A673 (cell line): ENCODE measurements at regions of chr19 and their contacts with region 1.

Region 1: DNA sequence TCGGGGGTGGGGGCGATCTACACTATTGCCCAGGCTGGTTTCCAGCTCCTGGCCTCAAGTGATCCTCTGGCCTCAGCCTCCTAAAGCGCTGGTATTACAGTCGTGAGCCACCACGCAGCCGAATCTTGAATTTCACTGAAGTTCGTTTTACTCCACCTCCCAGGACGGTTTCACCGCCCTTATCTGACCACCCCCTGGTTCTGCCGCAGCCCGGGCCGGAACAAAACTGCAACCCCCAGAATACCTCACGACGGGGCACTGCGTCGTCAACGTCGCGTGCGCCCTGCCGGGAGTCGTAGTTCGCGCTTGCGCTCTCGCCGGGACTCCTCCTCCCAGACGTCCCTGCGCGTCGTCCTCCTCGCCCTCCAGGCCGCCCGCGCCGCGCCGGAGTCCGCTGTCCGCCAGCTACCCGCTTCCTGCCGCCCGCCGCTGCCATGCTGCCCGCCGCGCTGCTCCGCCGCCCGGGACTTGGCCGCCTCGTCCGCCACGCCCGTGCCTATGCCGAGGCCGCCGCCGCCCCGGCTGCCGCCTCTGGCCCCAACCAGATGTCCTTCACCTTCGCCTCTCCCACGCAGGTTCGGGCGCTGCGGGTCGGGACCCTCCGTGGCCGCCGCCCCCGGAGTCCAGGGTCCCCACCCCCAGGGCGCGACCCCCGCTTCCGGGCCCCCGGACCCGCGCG is at the start of gene ATP5F1D:
- DNase-seq: peak; percentile 97
- H3K4me3 ChIP-seq: peak within 1 kb of the TSS; percentile 98
- H3K27ac ChIP-seq: peak within 1 kb of the TSS; percentile 95
- H3K4me1 ChIP-seq: peaks cover 49% of the 10 kb centered on the region
- H3K27me3 ChIP-seq: no peaks in the 10 kb centered on the region
- CTCF ChIP-seq: no peak
- total RNA-seq, gene ATP5F1D: 237 and 250 TPM in 2 replicates

Region 2: GRCh38 chr19:984165-984967 is 257.2 kb before region 1 on chr19 and contains the start of gene WDR18:
- CTCF ChIA-PET with region 1: interaction called, 3 read pairs
- POLR2A ChIA-PET with region 1: no interaction called
- intact Hi-C with region 1: loop called (anchors 2 kb)
- DNase-seq: peak; percentile 96
- H3K4me3 ChIP-seq: peak within 1 kb of the TSS; percentile 80
- H3K27ac ChIP-seq: peak within 1 kb of the TSS; percentile 98
- H3K4me1 ChIP-seq: peaks cover 13% of the 10 kb centered on the region
- H3K27me3 ChIP-seq: no peaks in the 10 kb centered on the region
- CTCF ChIP-seq: no peak
- total RNA-seq, gene WDR18: 109 and 116 TPM in 2 replicates

Region 3: GRCh38 chr19:1533510-1534150 is 292.1 kb after region 1 on chr19:
- CTCF ChIA-PET with region 1: no interaction called
- POLR2A ChIA-PET with region 1: interaction called, 13 read pairs
- intact Hi-C with region 1: no loop called
- DNase-seq: no peak
- H3K4me3 ChIP-seq: no peak overlapping the region
- H3K27ac ChIP-seq: no peak overlapping the region
- H3K4me1 ChIP-seq: peaks cover 3% of the 10 kb centered on the region
- H3K27me3 ChIP-seq: no peaks in the 10 kb centered on the region
- CTCF ChIP-seq: no peak